CD8-positive, alpha-beta T cell (primary cell): ENCODE measurements at regions of chr14 and their contacts with region 1.

Region 1: GRCh38 chr14:90865484-90865883 is 49.3 kb upstream of the TTC7B start:
- DNase-seq: no peak
- ATAC-seq: no peak
- H3K4me3 ChIP-seq: no peak overlapping the region
- H3K4me3 Mint-ChIP-seq: no peak overlapping the region
- H3K27ac ChIP-seq: no peak overlapping the region
- H3K27ac Mint-ChIP-seq: no peak overlapping the region
- H3K4me1 ChIP-seq: no peaks in the 10 kb centered on the region
- H3K4me1 Mint-ChIP-seq: no peaks in the 10 kb centered on the region
- H3K27me3 ChIP-seq: no peaks in the 10 kb centered on the region
- H3K27me3 Mint-ChIP-seq: no peaks in the 10 kb centered on the region
- CTCF ChIP-seq: no peak

Region 2: GRCh38 chr14:90785471-90785870 is 80.0 kb before region 1 on chr14:
- CTCF ChIA-PET with region 1: no interaction called
- POLR2A ChIA-PET with region 1: no interaction called
- intact Hi-C with region 1: loop called in 1 of 2 experiments (anchors 10 kb)
- DNase-seq: peak in 1 of 9 experiments; percentile 15
- ATAC-seq: no peak
- H3K4me3 ChIP-seq: no peak overlapping the region
- H3K4me3 Mint-ChIP-seq: no peak overlapping the region
- H3K27ac ChIP-seq: no peak overlapping the region
- H3K27ac Mint-ChIP-seq: no peak overlapping the region
- H3K4me1 ChIP-seq: no peaks in the 10 kb centered on the region
- H3K4me1 Mint-ChIP-seq: no peaks in the 10 kb centered on the region
- H3K27me3 ChIP-seq: no peaks in the 10 kb centered on the region
- H3K27me3 Mint-ChIP-seq: no peaks in the 10 kb centered on the region
- CTCF ChIP-seq: no peak